OCI-LY7 (cell line): ENCODE measurements at regions of chr7 and their contacts with region 1.

Region 1: DNA sequence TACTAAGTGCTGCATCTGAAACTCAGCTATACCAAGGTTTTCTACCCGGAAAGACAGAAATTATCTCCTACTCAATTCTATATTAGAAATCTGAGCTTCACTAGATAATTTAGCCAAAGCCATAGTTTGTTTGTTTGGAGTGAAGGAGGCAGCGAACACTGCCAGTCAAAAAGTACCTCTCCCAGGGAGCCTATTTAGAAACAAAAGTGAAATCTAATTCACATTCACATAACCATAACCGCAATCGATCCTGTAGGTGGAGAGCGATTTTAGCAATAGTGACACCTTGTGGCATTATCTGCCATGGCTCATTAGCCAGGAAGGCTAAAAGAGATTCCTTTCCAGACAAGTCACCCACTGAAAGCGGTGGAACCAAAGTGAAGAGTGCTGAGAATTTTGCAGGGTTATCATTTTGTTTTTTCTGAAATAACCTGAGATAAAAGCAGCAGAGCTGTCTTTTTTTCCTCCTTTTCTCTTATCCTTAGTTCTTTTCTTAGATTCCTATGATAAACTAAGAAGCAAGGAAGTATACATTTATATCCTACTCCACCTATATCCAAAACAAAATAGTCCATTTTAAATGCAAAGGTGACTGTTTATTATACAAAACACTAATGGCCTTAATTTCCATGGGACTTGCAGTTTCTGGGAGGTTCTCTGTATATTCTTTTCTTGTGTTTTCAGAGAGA is 83.7 kb upstream of the BET1 start:
- DNase-seq: peak; percentile 83
- H3K4me3 ChIP-seq: peak overlapping the region; percentile 52
- H3K27ac ChIP-seq: no peak overlapping the region
- H3K4me1 ChIP-seq: peaks cover 20% of the 10 kb centered on the region
- CTCF ChIP-seq: peak; percentile 98

Region 2: GRCh38 chr7:93902777-93903423 is 184.9 kb before region 1 on chr7:
- CTCF ChIA-PET with region 1: interaction called, 10 read pairs
- POLR2A ChIA-PET with region 1: interaction called, 7 read pairs
- intact Hi-C with region 1: loop called (anchors 1 kb)
- DNase-seq: peak; percentile 60
- H3K4me3 ChIP-seq: no peak overlapping the region
- H3K27ac ChIP-seq: no peak overlapping the region
- H3K4me1 ChIP-seq: no peaks in the 10 kb centered on the region
- CTCF ChIP-seq: peak; percentile 99

Region 3: DNA sequence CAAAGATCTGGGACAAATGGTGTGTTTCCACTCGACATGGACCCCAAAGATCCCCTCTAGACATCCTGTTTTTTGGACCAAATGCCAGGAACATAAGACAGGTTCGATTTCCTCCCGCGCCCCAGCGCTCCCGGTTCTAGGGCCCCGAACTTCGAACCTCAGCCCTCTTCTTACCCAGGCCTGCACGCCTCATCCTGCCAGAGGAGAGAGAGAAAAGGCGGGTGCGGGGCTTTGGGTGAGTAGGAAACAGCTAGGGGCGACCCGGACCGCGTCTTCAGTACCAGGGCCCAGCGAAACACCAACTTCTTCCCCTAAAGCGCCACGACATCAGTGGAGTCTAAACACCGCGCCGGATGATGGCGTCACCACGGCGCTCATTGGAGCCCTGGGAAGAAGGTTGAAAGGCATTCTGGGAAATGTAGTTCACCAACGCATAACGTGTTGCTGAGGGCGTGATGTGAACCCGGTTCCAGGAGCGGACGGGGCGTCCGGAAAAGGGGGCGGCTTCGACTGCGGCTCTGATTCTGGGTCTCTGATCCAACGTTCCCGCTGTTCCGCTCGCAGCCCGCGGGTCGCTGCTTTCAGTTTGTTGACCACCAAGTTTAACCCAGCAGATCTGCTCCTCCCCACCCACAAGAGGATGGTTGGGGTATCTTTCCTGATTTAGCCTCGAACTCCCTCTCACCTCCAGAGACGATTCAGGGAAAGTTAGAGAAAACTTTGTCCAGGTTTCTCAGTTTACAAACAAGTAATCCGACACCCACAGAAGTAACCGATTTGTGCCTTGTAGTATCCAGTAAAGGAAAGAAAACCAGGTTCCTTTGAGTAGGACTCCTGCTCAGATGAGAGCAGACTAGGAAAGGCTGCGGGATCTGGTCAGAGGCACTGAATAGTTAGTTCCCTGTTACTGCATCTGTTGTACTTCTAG is 83.5 kb before region 1 on chr7 and contains the start of gene BET1:
- CTCF ChIA-PET with region 1: no interaction called
- POLR2A ChIA-PET with region 1: no interaction called
- intact Hi-C with region 1: loop called (anchors 2 kb)
- DNase-seq: peak; percentile 97
- H3K4me3 ChIP-seq: peak within 1 kb of the TSS; percentile 81
- H3K27ac ChIP-seq: peak within 1 kb of the TSS; percentile 16
- H3K4me1 ChIP-seq: peaks cover 45% of the 10 kb centered on the region
- CTCF ChIP-seq: no peak
- total RNA-seq, gene BET1: 14.3 and 20.4 TPM in 2 replicates

Region 4: GRCh38 chr7:94069162-94069739 is 18.6 kb before region 1 on chr7:
- CTCF ChIA-PET with region 1: interaction called, 3 read pairs
- POLR2A ChIA-PET with region 1: interaction called, 11 read pairs
- intact Hi-C with region 1: no loop called
- DNase-seq: peak; percentile 62
- H3K4me3 ChIP-seq: peak overlapping the region; percentile 29
- H3K27ac ChIP-seq: peak overlapping the region; percentile 12
- H3K4me1 ChIP-seq: peaks cover 34% of the 10 kb centered on the region
- CTCF ChIP-seq: no peak

Region 5: DNA sequence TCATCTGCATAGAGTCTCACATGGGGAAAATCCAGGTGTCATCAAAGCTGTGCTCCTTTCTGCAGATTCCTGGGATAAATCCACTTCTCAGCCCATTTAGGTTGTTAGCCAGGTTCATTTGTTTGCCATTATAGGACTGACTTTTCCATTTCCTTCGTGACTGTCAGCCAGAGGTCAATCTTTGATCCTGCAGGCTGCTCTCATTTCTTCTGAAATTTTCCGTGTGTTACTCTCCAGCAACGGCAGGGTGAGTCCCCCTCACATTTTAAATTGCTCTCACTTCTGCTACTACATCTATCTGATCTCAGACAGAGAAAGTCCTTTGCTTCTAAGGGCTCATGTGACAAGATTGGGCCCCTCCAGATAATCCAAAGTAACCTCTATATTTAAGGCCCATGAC is 67.0 kb after region 1 on chr7:
- CTCF ChIA-PET with region 1: no interaction called
- POLR2A ChIA-PET with region 1: no interaction called
- intact Hi-C with region 1: no loop called
- DNase-seq: peak; percentile 35
- H3K4me3 ChIP-seq: no peak overlapping the region
- H3K27ac ChIP-seq: no peak overlapping the region
- H3K4me1 ChIP-seq: no peaks in the 10 kb centered on the region
- CTCF ChIP-seq: 0 out of 2 replicates have a peak, but pooled peaks have one; percentile 10